Activated CD4-positive, alpha-beta memory T cell treated with anti-CD3 and anti-CD28 coated beads for 36 hours (primary cell): ENCODE measurements at regions of chr2 and their contacts with region 1.

Region 1: DNA sequence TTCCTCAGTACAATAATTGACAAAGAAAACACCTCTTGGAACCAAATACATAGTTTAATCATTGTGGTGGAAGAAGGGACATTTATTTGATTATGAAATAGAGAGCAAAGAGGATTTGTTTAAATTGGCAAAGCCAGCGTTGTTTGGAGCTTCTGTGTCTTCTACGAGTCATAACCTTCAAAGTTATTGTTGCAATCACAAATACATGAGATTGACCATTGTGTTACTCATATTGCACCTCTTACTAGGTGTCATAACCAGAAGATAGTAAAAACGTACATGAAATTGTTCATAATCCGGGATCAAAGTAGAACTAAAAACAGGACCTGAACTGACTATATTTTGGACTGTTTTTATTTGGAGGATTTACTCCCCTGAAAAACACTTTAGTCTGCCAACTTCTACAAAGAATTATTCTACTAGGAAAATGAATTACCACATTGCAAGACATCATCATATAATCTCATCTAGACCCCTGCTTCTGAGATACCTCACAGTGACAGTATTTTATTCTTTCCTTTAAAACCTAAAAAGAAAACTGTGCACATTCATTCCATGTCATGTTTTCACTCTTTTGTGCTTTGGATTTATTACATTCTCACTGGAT is 151.7 kb upstream of the KLF7 start:
- DNase-seq: no peak
- H3K4me3 Mint-ChIP-seq: no peak overlapping the region
- H3K27ac Mint-ChIP-seq: peak overlapping the region; percentile 83
- H3K4me1 Mint-ChIP-seq: peaks cover 30% of the 10 kb centered on the region
- H3K27me3 Mint-ChIP-seq: peaks cover 3% of the 10 kb centered on the region

Region 2: DNA sequence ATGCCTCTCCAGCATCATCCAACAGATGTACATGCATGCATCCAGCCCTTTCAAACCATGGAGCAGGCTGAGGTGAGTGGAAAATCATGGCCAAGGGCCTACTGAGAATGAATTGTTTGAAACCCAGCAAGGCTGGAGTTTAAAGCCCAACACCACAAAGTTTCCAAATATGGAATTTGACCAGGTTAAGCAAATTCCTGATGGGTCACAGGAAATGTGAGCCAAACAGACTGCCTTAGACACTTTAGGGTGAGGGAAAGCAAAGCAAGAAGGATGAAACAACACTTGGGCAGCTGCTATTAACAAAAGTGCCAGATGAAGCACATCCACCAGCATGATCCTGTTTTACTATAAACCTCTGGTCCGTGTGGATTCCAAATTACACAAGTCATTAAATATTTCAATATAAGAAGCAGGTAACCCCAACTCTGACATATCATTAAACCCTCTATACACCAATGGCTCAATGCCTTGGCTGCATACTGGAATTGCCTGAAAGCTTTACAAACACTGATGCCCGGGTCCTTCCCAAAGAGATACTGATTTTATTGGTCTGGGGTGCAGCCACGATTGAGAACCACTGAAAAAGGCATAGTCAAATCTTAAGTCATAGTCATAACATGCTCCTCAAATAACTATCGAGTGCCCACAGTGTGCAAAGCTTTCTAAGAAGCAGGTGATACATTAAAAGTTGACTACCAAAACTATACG is 160.9 kb before region 1 on chr2:
- CTCF ChIA-PET with region 1: no interaction called
- POLR2A ChIA-PET with region 1: no interaction called
- intact Hi-C with region 1: loop called (anchors 1 kb)
- DNase-seq: peak; percentile 66
- H3K4me3 Mint-ChIP-seq: no peak overlapping the region
- H3K27ac Mint-ChIP-seq: peak overlapping the region; percentile 46
- H3K4me1 Mint-ChIP-seq: peaks cover 89% of the 10 kb centered on the region
- H3K27me3 Mint-ChIP-seq: no peaks in the 10 kb centered on the region

Region 3: GRCh38 chr2:207283356-207283755 is 34.1 kb before region 1 on chr2:
- CTCF ChIA-PET with region 1: no interaction called
- POLR2A ChIA-PET with region 1: no interaction called
- intact Hi-C with region 1: loop called (anchors 1 kb)
- DNase-seq: peak; percentile 34
- H3K4me3 Mint-ChIP-seq: no peak overlapping the region
- H3K27ac Mint-ChIP-seq: peak overlapping the region; percentile 65
- H3K4me1 Mint-ChIP-seq: peaks cover 67% of the 10 kb centered on the region
- H3K27me3 Mint-ChIP-seq: no peaks in the 10 kb centered on the region

Region 4: DNA sequence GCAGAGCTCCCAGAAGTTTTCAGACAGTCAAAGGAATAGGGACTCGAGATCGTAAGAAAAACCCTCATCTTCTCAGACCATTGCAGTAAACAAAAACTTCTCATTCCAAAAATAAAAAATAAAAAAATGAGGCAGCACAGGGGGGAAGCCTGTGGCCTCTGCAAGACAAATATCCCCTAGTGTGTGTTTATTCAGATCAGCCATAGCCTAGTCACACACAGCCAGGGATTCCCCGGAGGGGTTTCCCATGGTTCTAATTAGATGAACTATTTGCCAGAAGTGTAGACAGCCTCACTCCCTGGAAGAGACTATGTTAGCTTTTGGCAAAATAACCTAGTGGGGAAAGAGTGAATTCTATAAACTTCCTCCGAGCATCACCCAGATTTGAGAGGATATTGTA is 28.9 kb before region 1 on chr2:
- CTCF ChIA-PET with region 1: interaction called, 3 read pairs
- POLR2A ChIA-PET with region 1: no interaction called
- intact Hi-C with region 1: loop called (anchors 1 kb)
- DNase-seq: peak; percentile 76
- H3K4me3 Mint-ChIP-seq: no peak overlapping the region
- H3K27ac Mint-ChIP-seq: peak overlapping the region; percentile 9
- H3K4me1 Mint-ChIP-seq: peaks cover 80% of the 10 kb centered on the region
- H3K27me3 Mint-ChIP-seq: peaks cover 4% of the 10 kb centered on the region